CD8-positive, alpha-beta T cell (primary cell): ENCODE measurements at regions of chr1 and their contacts with region 1.

Region 1: GRCh38 chr1:157156058-157156541 is 17.9 kb upstream of the ETV3 start:
- DNase-seq: peak; percentile 58 to 88 (median 77)
- ATAC-seq: peak; percentile 59
- H3K4me3 ChIP-seq: no peak overlapping the region
- H3K4me3 Mint-ChIP-seq: peak overlapping the region; percentile 46
- H3K27ac ChIP-seq: no peak overlapping the region
- H3K27ac Mint-ChIP-seq: peak overlapping the region; percentile 24
- H3K4me1 ChIP-seq: peaks cover 18% of the 10 kb centered on the region
- H3K4me1 Mint-ChIP-seq: peaks cover 17% of the 10 kb centered on the region
- H3K27me3 ChIP-seq: peaks cover 0 to 4% of the 10 kb centered on the region in 2 experiments
- H3K27me3 Mint-ChIP-seq: peaks cover 12% of the 10 kb centered on the region
- CTCF ChIP-seq: peak; percentile 92

Region 2: DNA sequence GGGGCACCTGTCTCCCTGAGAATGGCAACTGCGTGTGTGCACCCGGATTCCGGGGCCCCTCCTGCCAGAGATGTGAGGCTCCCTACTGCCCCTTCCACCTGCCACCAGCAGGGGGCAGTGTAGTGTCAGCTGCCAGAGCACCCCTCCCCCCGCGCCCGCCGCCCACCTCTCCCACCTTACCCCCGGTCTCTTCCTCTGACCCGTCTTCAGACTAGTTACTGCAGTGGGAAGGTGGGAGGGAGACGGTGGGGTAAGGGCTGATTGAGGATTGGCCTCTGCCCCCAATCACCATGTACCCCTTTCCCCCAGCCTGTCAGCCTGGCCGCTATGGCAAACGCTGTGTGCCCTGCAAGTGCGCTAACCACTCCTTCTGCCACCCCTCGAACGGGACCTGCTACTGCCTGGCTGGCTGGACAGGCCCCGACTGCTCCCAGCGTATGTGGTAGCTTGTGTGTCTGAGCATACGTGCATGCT is 245.8 kb before region 1 on chr1:
- CTCF ChIA-PET with region 1: interaction called, 3 read pairs
- POLR2A ChIA-PET with region 1: no interaction called
- intact Hi-C with region 1: loop called in 1 of 2 experiments (anchors 5 kb)
- DNase-seq: peak; percentile 19 to 72 (median 55)
- ATAC-seq: peak; percentile 73
- H3K4me3 ChIP-seq: no peak overlapping the region
- H3K4me3 Mint-ChIP-seq: no peak overlapping the region
- H3K27ac ChIP-seq: no peak overlapping the region
- H3K27ac Mint-ChIP-seq: no peak overlapping the region
- H3K4me1 ChIP-seq: no peaks in the 10 kb centered on the region
- H3K4me1 Mint-ChIP-seq: no peaks in the 10 kb centered on the region
- H3K27me3 ChIP-seq: peaks cover 0 to 6% of the 10 kb centered on the region in 2 experiments
- H3K27me3 Mint-ChIP-seq: peaks cover 30% of the 10 kb centered on the region
- CTCF ChIP-seq: peak; percentile 74

Region 3: GRCh38 chr1:157099630-157100009 is 56.5 kb before region 1 on chr1 and contains the start of gene ETV3L:
- CTCF ChIA-PET with region 1: interaction called, 61 read pairs
- POLR2A ChIA-PET with region 1: no interaction called
- intact Hi-C with region 1: no loop called
- DNase-seq: peak in 1 of 9 experiments; percentile 16
- ATAC-seq: no peak
- H3K4me3 ChIP-seq: no peak within 1 kb of the TSS
- H3K4me3 Mint-ChIP-seq: no peak within 1 kb of the TSS
- H3K27ac ChIP-seq: no peak within 1 kb of the TSS
- H3K27ac Mint-ChIP-seq: no peak within 1 kb of the TSS
- H3K4me1 ChIP-seq: no peaks in the 10 kb centered on the region
- H3K4me1 Mint-ChIP-seq: no peaks in the 10 kb centered on the region
- H3K27me3 ChIP-seq: no peaks in the 10 kb centered on the region
- H3K27me3 Mint-ChIP-seq: no peaks in the 10 kb centered on the region
- CTCF ChIP-seq: no peak
- total RNA-seq, gene ETV3L: not detected

Region 4: DNA sequence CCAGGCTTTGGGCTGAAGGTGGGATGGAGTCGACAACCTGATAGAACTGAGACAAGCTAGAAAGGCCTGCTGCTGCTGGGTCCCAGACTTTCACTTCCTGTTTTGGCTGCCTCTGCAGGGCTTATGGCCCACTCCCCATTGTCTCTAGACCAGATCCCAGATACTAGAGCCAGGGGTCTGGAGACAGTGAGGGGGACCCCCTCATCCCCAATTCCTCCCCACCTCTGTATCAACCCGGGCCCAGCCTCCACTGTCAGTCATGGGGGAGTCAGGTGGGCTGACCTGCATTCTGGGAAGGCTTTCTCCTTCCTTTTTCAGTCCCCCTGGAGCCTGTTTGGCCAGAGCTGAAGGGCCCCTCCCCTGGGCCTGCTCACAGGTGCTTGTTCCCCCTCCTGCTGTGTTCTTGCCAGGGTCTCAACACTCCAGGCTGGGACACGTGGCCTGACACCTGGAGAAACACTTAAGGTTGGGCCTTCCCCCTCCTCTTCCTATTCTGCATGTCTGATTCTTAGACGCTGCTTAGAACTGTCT is 38.5 kb before region 1 on chr1:
- CTCF ChIA-PET with region 1: interaction called, 6 read pairs
- POLR2A ChIA-PET with region 1: no interaction called
- intact Hi-C with region 1: loop called in 1 of 2 experiments (anchors 2 kb)
- DNase-seq: peak in 1 of 9 experiments; percentile 17
- ATAC-seq: no peak
- H3K4me3 ChIP-seq: no peak overlapping the region
- H3K4me3 Mint-ChIP-seq: no peak overlapping the region
- H3K27ac ChIP-seq: no peak overlapping the region
- H3K27ac Mint-ChIP-seq: no peak overlapping the region
- H3K4me1 ChIP-seq: no peaks in the 10 kb centered on the region
- H3K4me1 Mint-ChIP-seq: peaks cover 9% of the 10 kb centered on the region
- H3K27me3 ChIP-seq: no peaks in the 10 kb centered on the region
- H3K27me3 Mint-ChIP-seq: peaks cover 2% of the 10 kb centered on the region
- CTCF ChIP-seq: no peak

Region 5: GRCh38 chr1:157138220-157139051 is 17.7 kb before region 1 on chr1 and contains the start of gene ETV3:
- CTCF ChIA-PET with region 1: interaction called, 59 read pairs
- POLR2A ChIA-PET with region 1: interaction called, 3 read pairs
- intact Hi-C with region 1: no loop called
- DNase-seq: peak; percentile 73 to 96 (median 87)
- ATAC-seq: peak; percentile 77
- H3K4me3 ChIP-seq: peak within 1 kb of the TSS; percentile 85 to 93
- H3K4me3 Mint-ChIP-seq: peak within 1 kb of the TSS; percentile 94
- H3K27ac ChIP-seq: peak within 1 kb of the TSS; percentile 84 to 97
- H3K27ac Mint-ChIP-seq: peak within 1 kb of the TSS; percentile 95
- H3K4me1 ChIP-seq: peaks cover 52% of the 10 kb centered on the region
- H3K4me1 Mint-ChIP-seq: peaks cover 54% of the 10 kb centered on the region
- H3K27me3 ChIP-seq: no peaks in the 10 kb centered on the region
- H3K27me3 Mint-ChIP-seq: no peaks in the 10 kb centered on the region
- CTCF ChIP-seq: no peak
- total RNA-seq, gene ETV3: 88.9 to 94.0 TPM

Region 6: GRCh38 chr1:157415661-157416060 is 259.6 kb after region 1 on chr1:
- CTCF ChIA-PET with region 1: no interaction called
- POLR2A ChIA-PET with region 1: no interaction called
- intact Hi-C with region 1: no loop called
- DNase-seq: no peak
- ATAC-seq: no peak
- H3K4me3 ChIP-seq: no peak overlapping the region
- H3K4me3 Mint-ChIP-seq: no peak overlapping the region
- H3K27ac ChIP-seq: no peak overlapping the region
- H3K27ac Mint-ChIP-seq: no peak overlapping the region
- H3K4me1 ChIP-seq: no peaks in the 10 kb centered on the region
- H3K4me1 Mint-ChIP-seq: no peaks in the 10 kb centered on the region
- H3K27me3 ChIP-seq: no peaks in the 10 kb centered on the region
- H3K27me3 Mint-ChIP-seq: peaks cover 17% of the 10 kb centered on the region
- CTCF ChIP-seq: no peak